PC-9 (cell line): ENCODE measurements at regions of chr10 and their contacts with region 1.

Region 1: DNA sequence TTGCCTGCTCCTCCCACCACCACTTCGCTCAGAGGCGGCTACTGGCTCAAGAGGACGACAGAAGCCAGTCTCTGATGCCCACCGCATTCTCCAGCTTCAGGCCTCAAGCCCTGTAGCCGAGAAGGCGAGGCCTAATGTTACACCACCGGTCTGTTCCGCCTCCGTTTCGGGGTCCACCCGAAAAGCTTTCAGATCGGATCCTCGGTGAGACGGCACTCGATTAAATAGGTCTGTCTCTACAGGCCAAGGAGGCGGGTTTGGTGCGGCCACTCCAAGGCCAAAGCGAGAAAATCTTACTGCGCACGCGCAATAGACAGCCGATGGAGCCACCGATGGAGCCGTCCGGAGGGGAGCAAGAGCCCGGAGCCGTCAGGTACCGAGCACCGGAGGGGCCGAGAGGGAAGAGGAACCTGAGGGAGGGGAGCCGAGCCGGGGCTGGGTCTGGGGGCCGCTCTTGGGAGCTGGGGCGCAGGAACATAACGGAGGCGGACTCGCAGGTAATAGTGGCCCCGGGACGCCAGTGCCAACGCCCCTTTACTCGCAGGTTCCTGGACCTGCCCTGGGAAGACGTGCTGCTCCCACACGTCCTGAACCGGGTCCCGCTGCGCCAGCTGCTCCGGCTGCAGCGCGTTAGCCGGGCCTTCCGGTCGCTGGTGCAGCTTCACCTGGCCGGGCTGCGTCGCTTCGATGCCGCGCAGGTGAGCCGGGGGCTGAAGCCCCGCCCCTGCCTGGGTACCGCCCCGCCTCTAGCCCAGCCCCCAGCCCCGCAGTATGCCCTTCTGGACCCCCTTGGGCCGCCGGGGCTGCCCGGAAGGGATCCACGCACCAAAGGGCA is at the start of gene FBXL15:
- DNase-seq: peak; percentile 85 to 89
- H3K4me3 ChIP-seq: peak within 1 kb of the TSS; percentile 94
- H3K27ac ChIP-seq: peak within 1 kb of the TSS; percentile 57
- H3K4me1 ChIP-seq: peaks cover 5% of the 10 kb centered on the region; the same call in 1 of the 2 replicates
- H3K27me3 ChIP-seq: 0 out of 2 replicates have a peak, but pooled peaks cover 3% of the 10 kb centered on the region
- CTCF ChIP-seq: no peak
- total RNA-seq, gene FBXL15: 6.2 and 12.7 TPM in 2 replicates

Region 2: GRCh38 chr10:102225646-102226541 is 195.1 kb before region 1 on chr10 and contains the start of gene ELOVL3:
- CTCF ChIA-PET with region 1: interaction called, 5 read pairs
- POLR2A ChIA-PET with region 1: no interaction called
- intact Hi-C with region 1: loop called (anchors 2 kb)
- DNase-seq: peak; percentile 57 to 86
- H3K4me3 ChIP-seq: no peak within 1 kb of the TSS
- H3K27ac ChIP-seq: no peak within 1 kb of the TSS
- H3K4me1 ChIP-seq: peaks cover 7% of the 10 kb centered on the region
- H3K27me3 ChIP-seq: no peaks in the 10 kb centered on the region
- CTCF ChIP-seq: no peak
- total RNA-seq, gene ELOVL3: 0.61 and 0.88 TPM in 2 replicates

Region 3: DNA sequence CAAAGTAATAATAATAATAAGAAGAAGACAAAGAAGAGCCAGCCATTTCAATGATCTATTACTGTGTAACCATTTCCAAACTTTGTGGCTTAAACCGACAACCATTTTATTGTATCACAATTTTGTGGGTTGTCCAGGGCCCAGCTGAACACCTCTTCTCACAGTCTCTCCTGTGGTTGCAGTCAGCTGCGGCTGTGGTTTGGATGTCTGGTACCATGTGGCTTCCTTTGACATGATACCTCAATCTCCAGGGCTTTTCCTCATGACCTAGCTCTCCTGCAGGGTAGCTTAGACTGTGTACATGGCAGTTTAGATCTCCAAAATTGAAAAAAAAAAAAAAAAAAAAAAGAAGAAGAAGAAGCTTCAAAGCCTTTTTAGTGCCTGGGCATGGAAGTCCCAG is 98.1 kb before region 1 on chr10:
- CTCF ChIA-PET with region 1: no interaction called
- POLR2A ChIA-PET with region 1: no interaction called
- intact Hi-C with region 1: no loop called
- DNase-seq: no peak
- H3K4me3 ChIP-seq: no peak overlapping the region
- H3K27ac ChIP-seq: no peak overlapping the region
- H3K4me1 ChIP-seq: no peaks in the 10 kb centered on the region
- H3K27me3 ChIP-seq: no peaks in the 10 kb centered on the region
- CTCF ChIP-seq: no peak

Region 4: DNA sequence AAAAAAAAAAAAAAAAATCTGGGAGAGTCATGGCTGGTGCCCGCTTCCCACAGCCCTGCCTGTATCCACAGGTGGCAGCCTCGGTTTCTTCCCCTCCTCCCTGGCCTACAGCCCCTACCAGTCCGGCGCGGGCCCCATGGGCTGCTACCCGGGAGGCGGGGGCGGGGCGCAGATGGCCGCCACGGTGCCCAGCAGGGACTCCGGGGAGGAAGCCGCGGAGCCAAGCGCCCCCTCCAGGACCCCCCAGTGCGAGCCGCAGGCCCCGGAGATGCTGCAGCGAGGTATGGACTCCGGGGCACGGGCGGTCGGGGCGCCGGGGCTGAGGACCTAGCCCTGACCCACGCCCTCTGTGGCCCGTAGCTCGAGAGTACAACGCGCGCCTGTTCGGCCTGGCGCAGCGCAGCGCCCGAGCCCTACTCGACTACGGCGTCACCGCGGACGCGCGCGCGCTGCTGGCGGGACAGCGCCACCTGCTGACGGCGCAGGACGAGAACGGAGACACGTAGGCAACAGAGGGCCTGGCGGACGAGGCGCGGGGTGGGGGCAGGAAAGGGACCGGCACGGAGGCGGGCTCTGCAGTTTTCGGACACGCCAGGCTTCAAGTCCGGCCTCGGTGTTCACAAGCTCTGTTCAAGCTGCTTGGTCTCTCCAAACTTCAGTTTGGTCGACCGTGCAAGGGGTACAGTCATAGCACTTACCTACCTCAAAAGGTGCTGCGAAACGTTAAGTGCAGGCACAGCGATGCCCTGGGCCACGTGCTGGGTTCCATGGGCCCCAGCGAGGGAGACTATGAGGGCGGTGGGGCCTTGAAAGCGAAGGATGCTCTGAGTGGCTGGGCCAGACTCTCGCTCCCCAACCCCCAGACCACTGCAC is 21.6 kb before region 1 on chr10:
- CTCF ChIA-PET with region 1: no interaction called
- POLR2A ChIA-PET with region 1: no interaction called
- intact Hi-C with region 1: loop called (anchors 1 kb)
- DNase-seq: peak; percentile 56 to 83
- H3K4me3 ChIP-seq: peak overlapping the region; percentile 52
- H3K27ac ChIP-seq: no peak overlapping the region
- H3K4me1 ChIP-seq: peaks cover 18% of the 10 kb centered on the region
- H3K27me3 ChIP-seq: no peaks in the 10 kb centered on the region
- CTCF ChIP-seq: peak; percentile 80

Region 5: DNA sequence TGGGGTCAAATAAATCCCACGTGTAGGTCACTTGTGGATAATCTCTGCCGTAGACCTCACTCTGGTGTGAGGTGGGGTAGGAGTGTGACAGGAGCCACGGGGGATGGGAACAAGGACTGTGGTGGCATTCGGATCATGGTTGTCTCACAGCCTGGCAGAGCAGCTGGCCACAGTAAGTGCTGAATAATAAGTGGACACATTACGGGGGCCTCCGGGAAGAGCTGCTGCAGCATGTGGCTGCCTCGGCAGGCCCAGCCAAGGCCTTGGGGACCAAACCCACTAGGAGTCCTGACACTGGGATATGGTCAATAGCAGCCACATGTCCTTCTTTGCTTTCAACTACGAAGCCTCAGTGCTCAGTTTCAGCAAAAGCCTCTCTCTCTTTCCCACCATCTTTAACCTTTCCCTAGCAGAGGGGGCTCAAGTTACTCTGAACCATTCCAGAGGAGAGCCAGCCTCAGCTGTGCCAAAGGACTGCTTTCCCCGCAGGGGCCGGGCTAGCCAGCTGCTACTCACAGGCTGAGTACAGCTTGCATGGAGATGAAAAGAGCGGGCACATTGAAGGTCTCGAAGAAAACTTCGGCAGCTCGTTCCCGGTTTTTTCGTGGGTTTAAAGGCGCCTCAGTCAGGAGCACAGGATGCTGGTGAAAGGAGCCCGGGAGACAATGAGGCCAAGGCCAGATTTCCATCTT is 64.2 kb after region 1 on chr10:
- CTCF ChIA-PET with region 1: no interaction called
- POLR2A ChIA-PET with region 1: no interaction called
- intact Hi-C with region 1: no loop called
- DNase-seq: no peak
- H3K4me3 ChIP-seq: no peak overlapping the region
- H3K27ac ChIP-seq: no peak overlapping the region
- H3K4me1 ChIP-seq: no peaks in the 10 kb centered on the region
- H3K27me3 ChIP-seq: no peaks in the 10 kb centered on the region
- CTCF ChIP-seq: no peak

Region 6: GRCh38 chr10:102545265-102545871 is 124.3 kb after region 1 on chr10:
- CTCF ChIA-PET with region 1: no interaction called
- POLR2A ChIA-PET with region 1: interaction called, 16 read pairs
- intact Hi-C with region 1: no loop called
- DNase-seq: no peak
- H3K4me3 ChIP-seq: no peak overlapping the region
- H3K27ac ChIP-seq: no peak overlapping the region
- H3K4me1 ChIP-seq: no peaks in the 10 kb centered on the region
- H3K27me3 ChIP-seq: no peaks in the 10 kb centered on the region
- CTCF ChIP-seq: no peak